ENCODE measurements at regions of chr3 and their contacts with region 1.

Region 1: DNA sequence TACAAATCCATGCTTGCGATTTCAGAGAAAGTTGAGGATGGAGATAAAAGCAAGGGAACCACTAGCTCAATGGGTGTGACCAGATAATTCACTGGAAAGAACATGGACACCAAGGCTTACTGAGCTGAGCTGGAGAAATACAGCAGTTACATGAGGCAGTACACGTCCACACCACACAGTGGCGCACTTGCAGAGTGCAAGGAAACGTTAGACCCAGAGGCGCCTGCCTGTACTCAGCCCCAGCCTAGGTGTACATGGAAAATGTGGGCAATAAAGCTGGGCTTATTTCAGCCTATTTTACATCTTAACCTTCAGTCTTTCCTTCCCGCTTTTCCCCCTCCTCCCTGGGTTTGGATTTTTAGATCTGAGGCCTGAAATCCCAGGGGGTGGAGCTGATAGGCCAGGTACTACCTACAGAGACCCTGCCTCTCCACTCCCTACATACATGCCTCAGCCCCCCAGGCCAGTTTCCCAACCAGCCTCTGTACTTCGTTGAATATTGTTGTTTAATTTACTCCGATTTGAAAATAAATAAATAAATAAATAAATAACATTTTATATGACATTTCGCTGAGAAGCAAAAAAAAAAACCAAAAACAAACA is 60.1 kb downstream of the PCOLCE2 start:
- DNase-seq: peak in 1 of 2 donors; percentile 84
- H3K4me3 ChIP-seq: no peak overlapping the region
- H3K27ac ChIP-seq: no peak overlapping the region
- H3K4me1 ChIP-seq: no peaks in the 10 kb centered on the region
- H3K27me3 ChIP-seq: no peaks in the 10 kb centered on the region
- CTCF ChIP-seq: peak; percentile 72 to 89 (median 80)

Region 2: DNA sequence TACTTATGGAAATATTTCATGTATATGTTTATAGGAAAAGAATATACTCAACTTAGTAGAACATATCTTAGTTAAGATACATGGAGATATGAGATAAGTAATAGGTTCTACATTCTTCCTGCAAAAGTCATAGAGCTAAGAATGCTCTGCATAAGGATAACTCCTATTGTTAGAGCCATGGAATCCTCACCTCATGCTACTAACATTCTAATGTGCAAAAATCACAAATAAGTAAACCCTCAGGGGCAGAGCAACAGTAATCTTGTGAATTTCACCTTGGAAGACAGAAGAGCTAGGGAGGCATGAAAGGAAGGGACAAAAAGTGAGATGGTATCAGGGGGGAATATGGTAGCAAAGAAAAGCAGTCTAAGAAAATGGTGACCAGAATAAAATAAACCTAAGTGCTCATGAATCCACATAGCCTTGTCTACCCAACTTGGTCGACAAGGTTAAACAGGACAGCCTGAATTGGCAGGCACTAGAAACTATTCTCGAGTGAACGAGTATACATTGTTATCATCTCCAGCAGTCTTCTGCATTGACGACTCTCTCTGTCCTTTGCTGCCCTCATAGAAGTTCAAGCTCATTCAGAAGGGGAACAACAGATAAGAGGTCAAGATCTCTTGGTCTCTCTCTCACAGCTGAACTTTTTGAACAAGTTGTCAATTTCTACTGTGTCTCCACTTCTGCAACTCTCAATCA is 433.7 kb before region 1 on chr3:
- intact Hi-C with region 1: no loop called
- DNase-seq: no peak
- H3K4me3 ChIP-seq: no peak overlapping the region
- H3K27ac ChIP-seq: no peak overlapping the region
- H3K4me1 ChIP-seq: no peaks in the 10 kb centered on the region
- H3K27me3 ChIP-seq: no peaks in the 10 kb centered on the region
- CTCF ChIP-seq: no peak

Region 3: GRCh38 chr3:142586803-142587406 is 241.9 kb before region 1 on chr3:
- intact Hi-C with region 1: loop called (anchors 10 kb)
- DNase-seq: peak in 1 of 2 donors; percentile 75
- H3K4me3 ChIP-seq: no peak overlapping the region
- H3K27ac ChIP-seq: no peak overlapping the region
- H3K4me1 ChIP-seq: no peaks in the 10 kb centered on the region
- H3K27me3 ChIP-seq: no peaks in the 10 kb centered on the region
- CTCF ChIP-seq: peak; percentile 44 to 64 (median 45)

Region 4: DNA sequence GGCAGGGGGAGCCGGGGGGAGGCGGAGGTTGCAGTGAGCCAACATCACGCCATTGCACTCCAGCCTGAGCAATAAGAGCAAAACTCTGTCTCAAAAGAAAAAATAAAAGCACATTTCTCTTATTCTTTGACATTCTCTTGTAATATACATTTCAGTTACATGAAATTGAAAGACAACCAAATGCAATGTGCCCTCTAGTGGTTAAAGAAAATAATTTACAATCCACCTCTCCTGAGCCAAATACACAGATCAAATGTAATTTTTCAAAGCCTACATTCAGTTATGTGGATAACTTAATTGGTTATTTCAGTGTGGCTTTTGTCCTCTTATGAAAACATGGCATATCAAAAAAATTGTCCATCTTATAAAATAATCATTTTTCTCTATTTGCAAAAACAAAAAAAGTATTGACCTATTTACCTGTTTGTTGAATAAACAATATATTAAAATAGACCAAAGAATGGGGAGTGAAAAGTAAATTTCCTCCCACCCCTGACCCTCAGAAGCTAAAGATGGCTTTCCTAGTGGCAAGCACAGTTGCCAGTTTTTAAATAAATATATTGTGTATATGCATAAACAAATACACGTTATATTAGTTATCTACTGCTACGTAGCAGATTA is 158.4 kb after region 1 on chr3:
- intact Hi-C with region 1: loop called (anchors 1 kb)
- DNase-seq: no peak
- H3K4me3 ChIP-seq: no peak overlapping the region
- H3K27ac ChIP-seq: no peak overlapping the region
- H3K4me1 ChIP-seq: no peaks in the 10 kb centered on the region
- H3K27me3 ChIP-seq: no peaks in the 10 kb centered on the region
- CTCF ChIP-seq: peak; percentile 53 to 73 (median 60)

Region 5: GRCh38 chr3:143207338-143207961 is 378.6 kb after region 1 on chr3:
- intact Hi-C with region 1: no loop called
- DNase-seq: no peak
- H3K4me3 ChIP-seq: no peak overlapping the region
- H3K27ac ChIP-seq: no peak overlapping the region
- H3K4me1 ChIP-seq: no peaks in the 10 kb centered on the region
- H3K27me3 ChIP-seq: no peaks in the 10 kb centered on the region
- CTCF ChIP-seq: no peak